ENCODE measurements at regions of chr11 and their contacts with region 1.

Region 1: GRCh38 chr11:45964911-45965389 is 42.5 kb downstream of the LARGE2 start:
- DNase-seq: peak; percentile 76
- ATAC-seq: peak; percentile 93
- H3K4me3 ChIP-seq: no peak overlapping the region; the same call in 1 of the 2 replicates
- H3K27ac ChIP-seq: no peak overlapping the region
- H3K4me1 ChIP-seq: no peaks in the 10 kb centered on the region
- H3K27me3 ChIP-seq: no peaks in the 10 kb centered on the region
- CTCF ChIP-seq: peak; percentile 90

Region 2: GRCh38 chr11:44927174-44927661 is 1037.7 kb before region 1 on chr11:
- CTCF ChIA-PET with region 1: no interaction called
- POLR2A ChIA-PET with region 1: no interaction called
- intact Hi-C with region 1: no loop called
- DNase-seq: peak; percentile 79
- ATAC-seq: peak; percentile 89
- H3K4me3 ChIP-seq: no peak overlapping the region
- H3K27ac ChIP-seq: no peak overlapping the region
- H3K4me1 ChIP-seq: no peaks in the 10 kb centered on the region
- H3K27me3 ChIP-seq: no peaks in the 10 kb centered on the region
- CTCF ChIP-seq: peak; percentile 89

Region 3: GRCh38 chr11:45857961-45858474 is 106.9 kb before region 1 on chr11:
- CTCF ChIA-PET with region 1: no interaction called
- POLR2A ChIA-PET with region 1: no interaction called
- intact Hi-C with region 1: no loop called
- DNase-seq: no peak
- ATAC-seq: no peak
- H3K4me3 ChIP-seq: no peak overlapping the region
- H3K27ac ChIP-seq: no peak overlapping the region
- H3K4me1 ChIP-seq: no peaks in the 10 kb centered on the region
- H3K27me3 ChIP-seq: no peaks in the 10 kb centered on the region
- CTCF ChIP-seq: no peak

Region 4: DNA sequence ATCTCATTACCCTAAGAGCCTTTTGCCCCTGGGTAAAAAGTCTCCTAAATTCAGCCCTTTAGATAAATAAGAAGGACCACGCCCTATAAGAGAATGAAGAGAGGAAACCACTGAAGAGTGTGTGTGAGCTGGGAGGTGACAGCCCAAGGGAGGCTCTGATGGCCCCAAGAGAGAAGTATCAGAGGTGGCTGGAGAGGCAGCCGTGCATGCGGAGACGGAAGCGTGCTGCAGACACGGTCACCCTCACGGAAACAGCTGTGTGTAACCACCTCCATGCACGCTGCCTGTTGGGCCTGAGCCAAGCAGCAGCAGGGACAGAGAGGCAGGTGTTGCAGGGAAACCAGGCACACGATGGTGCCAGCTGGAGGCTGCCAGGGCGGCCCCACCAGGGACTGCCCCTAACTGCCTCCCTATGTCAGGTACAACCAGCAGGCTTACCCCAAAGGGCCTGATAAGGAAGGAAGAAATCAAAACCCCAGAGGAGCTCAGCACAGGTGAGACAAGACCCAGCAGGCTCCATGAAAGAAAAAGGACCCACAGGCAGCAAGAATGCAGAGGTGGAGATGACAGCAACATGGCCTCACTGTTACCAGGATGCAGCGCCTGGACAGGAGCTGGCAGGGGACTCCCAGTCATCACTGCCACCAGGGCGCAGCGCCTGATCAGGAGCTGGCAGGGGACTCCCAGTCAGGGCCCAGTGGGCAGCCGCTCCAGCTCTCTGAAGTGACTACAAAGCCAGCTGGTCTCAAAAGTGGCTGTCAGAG is 34.7 kb before region 1 on chr11:
- CTCF ChIA-PET with region 1: no interaction called
- POLR2A ChIA-PET with region 1: no interaction called
- intact Hi-C with region 1: no loop called
- DNase-seq: peak; percentile 7
- ATAC-seq: peak; percentile 64
- H3K4me3 ChIP-seq: no peak overlapping the region
- H3K27ac ChIP-seq: no peak overlapping the region
- H3K4me1 ChIP-seq: peaks cover 7% of the 10 kb centered on the region; the same call in 1 of the 2 replicates
- H3K27me3 ChIP-seq: no peaks in the 10 kb centered on the region
- CTCF ChIP-seq: no peak

Region 5: GRCh38 chr11:46006418-46007070 is 41.6 kb after region 1 on chr11:
- CTCF ChIA-PET with region 1: interaction called, 22 read pairs
- POLR2A ChIA-PET with region 1: no interaction called
- intact Hi-C with region 1: loop called (anchors 1 kb)
- DNase-seq: peak; percentile 83
- ATAC-seq: peak; percentile 92
- H3K4me3 ChIP-seq: no peak overlapping the region
- H3K27ac ChIP-seq: no peak overlapping the region
- H3K4me1 ChIP-seq: no peaks in the 10 kb centered on the region
- H3K27me3 ChIP-seq: no peaks in the 10 kb centered on the region
- CTCF ChIP-seq: peak; percentile 86

Region 6: GRCh38 chr11:46504817-46505613 is 540.1 kb after region 1 on chr11:
- CTCF ChIA-PET with region 1: no interaction called
- POLR2A ChIA-PET with region 1: interaction called, 19 read pairs
- intact Hi-C with region 1: no loop called
- DNase-seq: no peak
- ATAC-seq: peak; percentile 85
- H3K4me3 ChIP-seq: no peak overlapping the region
- H3K27ac ChIP-seq: no peak overlapping the region
- H3K4me1 ChIP-seq: no peaks in the 10 kb centered on the region
- H3K27me3 ChIP-seq: no peaks in the 10 kb centered on the region
- CTCF ChIP-seq: no peak